Panc1 (cell line): ENCODE measurements at regions of chr9 and their contacts with region 1.

Region 1: DNA sequence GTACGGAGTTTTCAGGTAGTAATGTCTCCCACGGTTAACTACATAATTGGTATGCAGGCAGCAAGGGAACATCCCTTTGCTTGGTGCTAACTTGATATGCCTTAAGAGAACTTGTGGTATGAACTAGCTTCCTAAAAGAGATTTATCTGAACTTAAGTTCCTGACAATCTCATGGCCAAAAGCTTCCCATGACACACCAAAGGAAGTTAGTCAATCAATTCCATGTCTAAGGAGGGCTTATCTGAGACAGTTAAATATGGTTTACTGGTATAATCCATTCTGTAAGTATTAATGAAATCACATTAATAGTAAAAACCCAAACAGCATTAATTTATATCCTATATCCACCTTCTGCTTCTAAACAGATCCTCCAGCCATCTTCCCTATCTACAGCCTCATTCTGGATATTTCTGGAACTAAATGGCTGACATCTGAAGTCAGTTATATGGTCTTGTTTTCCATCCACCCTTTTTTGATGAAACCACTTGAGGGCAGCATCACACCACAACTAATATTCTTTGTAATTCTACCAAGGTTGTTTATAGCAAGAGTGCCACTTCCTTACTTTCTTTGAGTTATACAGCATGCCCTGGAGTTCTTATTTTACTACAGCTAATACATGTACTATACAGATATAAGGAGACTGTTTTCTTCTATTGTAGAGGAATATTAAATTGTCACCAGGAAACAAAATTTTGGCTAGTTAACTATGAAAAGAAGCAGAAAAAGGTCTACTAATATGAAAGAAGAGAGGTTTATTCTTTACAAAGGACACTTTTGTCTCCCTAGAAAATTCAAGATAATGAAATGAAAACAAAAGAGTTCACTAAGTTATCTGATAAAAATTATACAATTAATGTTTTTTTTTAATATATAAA is 34.7 kb downstream of the SHOC1 start:
- DNase-seq: peak; percentile 88
- ATAC-seq: peak; percentile 93
- H3K4me3 ChIP-seq: no peak overlapping the region
- H3K27ac ChIP-seq: peak overlapping the region; percentile 76
- H3K4me1 ChIP-seq: peaks cover 2% of the 10 kb centered on the region; the same call in 1 of the 2 replicates
- H3K27me3 ChIP-seq: no peaks in the 10 kb centered on the region
- CTCF ChIP-seq: peak; percentile 52; the same call in 1 of the 2 replicates

Region 2: GRCh38 chr9:111525056-111525977 is 234.7 kb before region 1 on chr9 and contains the start of gene ZNF483:
- CTCF ChIA-PET with region 1: no interaction called
- POLR2A ChIA-PET with region 1: no interaction called
- in situ Hi-C with region 1: no loop called
- intact Hi-C with region 1: no loop called
- DNase-seq: peak; percentile 32
- ATAC-seq: peak; percentile 96
- H3K4me3 ChIP-seq: peak within 1 kb of the TSS; percentile 83 to 86
- H3K27ac ChIP-seq: peak within 1 kb of the TSS; percentile 68
- H3K4me1 ChIP-seq: no peaks in the 10 kb centered on the region
- H3K27me3 ChIP-seq: no peaks in the 10 kb centered on the region
- CTCF ChIP-seq: no peak
- total RNA-seq, gene ZNF483: 4.8 TPM

Region 3: DNA sequence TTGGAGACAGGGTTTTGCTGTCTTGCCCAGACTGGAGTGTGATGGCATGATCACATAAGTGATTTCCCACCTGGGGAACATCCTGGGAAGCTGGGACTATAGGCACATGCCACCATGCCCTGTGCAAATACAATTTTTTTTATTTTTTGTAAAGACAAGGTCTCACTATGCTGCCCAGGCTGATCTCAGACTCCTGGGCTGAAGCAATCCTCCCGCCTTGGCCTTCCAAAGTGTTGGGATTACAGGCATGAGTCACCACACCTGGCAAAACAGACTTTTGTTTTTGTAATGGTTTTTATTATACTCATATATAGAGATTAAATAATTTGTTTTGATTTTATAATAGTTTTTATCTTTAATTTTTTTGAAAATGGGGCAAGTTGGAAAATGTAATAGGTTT is 114.2 kb before region 1 on chr9:
- CTCF ChIA-PET with region 1: no interaction called
- POLR2A ChIA-PET with region 1: no interaction called
- in situ Hi-C with region 1: no loop called
- intact Hi-C with region 1: no loop called
- DNase-seq: no peak
- ATAC-seq: no peak
- H3K4me3 ChIP-seq: no peak overlapping the region
- H3K27ac ChIP-seq: no peak overlapping the region
- H3K4me1 ChIP-seq: no peaks in the 10 kb centered on the region
- H3K27me3 ChIP-seq: no peaks in the 10 kb centered on the region
- CTCF ChIP-seq: no peak

Region 4: DNA sequence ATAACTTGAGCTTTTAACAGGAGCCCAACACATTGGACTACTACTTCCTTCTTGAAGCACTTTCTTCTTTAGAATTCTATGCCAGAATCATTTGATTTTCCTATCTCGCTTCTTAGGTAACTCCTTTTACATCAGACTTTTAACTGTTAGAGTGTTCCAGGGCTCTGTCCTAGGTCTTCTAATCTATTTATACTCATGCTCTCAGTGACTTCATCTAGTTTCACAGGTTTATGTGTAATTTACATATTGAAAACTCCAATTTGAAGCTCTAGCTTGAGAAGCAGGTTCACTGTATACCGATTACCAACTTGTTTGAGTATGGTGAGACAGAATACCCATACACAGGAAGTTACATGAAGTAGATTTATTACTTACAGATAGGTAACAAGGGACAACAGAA is 23.4 kb after region 1 on chr9:
- CTCF ChIA-PET with region 1: no interaction called
- POLR2A ChIA-PET with region 1: no interaction called
- in situ Hi-C with region 1: no loop called
- intact Hi-C with region 1: no loop called
- DNase-seq: no peak
- ATAC-seq: no peak
- H3K4me3 ChIP-seq: no peak overlapping the region
- H3K27ac ChIP-seq: no peak overlapping the region
- H3K4me1 ChIP-seq: no peaks in the 10 kb centered on the region
- H3K27me3 ChIP-seq: no peaks in the 10 kb centered on the region
- CTCF ChIP-seq: no peak

Region 5: DNA sequence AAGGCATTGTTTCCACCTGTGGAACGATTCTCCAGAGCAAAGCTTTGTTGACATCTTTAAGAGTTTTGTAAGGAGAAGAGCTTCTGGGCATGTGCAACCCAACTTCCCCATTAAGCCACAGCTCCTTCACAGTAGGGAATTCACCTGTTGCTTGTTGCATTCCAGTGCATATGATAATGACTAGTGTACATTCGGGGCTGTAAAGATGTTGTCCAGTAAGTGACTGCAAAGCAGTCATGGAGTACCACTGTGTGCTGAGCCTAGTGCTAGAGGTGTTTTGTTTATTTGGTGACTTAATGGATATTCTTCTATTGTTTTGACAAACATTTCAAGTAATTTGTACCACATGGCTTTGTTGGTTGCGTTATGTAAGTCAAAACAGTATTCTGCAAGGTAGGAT is 149.4 kb after region 1 on chr9:
- CTCF ChIA-PET with region 1: no interaction called
- POLR2A ChIA-PET with region 1: no interaction called
- in situ Hi-C with region 1: no loop called
- intact Hi-C with region 1: loop called (anchors 10 kb)
- DNase-seq: no peak
- ATAC-seq: peak; percentile 51; the same call in 1 of the 2 replicates
- H3K4me3 ChIP-seq: no peak overlapping the region
- H3K27ac ChIP-seq: peak overlapping the region; percentile 44; the same call in 1 of the 2 replicates
- H3K4me1 ChIP-seq: peaks cover 66% of the 10 kb centered on the region
- H3K27me3 ChIP-seq: no peaks in the 10 kb centered on the region
- CTCF ChIP-seq: no peak